Gastrocnemius medialis (tissue), 4 donors: ENCODE measurements at regions of chr11 and their contacts with region 1.

Region 1: DNA sequence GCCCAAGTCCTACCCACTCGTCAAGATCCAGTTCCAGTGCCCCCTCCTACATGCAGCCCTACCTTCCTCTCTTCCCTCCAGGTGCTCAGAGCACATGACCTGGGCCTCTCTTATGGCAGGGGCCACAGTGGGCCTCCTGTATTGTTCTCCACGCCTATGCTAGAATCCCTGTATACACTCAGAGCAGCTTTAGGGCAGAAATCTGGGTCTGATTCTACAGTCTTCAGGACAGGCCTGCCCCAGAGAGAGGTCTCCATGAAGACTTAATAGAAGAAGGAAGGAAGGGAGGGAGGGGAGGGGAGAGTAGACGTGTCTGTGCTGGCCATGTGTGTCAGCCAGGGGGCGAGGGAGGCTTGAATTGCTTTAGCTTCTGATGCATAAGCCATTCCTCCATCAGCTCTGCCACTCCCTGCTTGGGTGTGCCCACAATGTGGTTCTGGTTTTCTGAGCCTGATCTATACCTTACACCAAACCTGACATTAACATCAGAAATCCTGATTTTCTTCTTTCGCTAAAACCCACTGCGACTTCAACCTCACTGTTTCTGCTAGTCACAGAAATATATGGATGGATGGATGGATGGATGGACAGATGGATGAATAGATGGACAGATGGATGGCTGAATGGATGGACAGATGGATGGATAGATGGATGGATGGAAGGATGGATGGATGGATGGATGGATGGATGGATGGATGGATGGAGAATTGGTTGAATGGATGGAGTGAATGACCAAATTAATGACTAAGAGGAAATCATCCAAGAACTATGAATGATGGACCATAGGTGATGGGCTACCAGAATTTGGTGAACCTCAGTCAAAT is 56.6 kb upstream of the PRDM11 start:
- DNase-seq: no peak
- ATAC-seq: no peak
- H3K4me3 ChIP-seq: no peak overlapping the region
- H3K27ac ChIP-seq: peak overlapping the region; percentile 63 to 80 (median 72)
- H3K4me1 ChIP-seq: peaks cover 20 to 23% of the 10 kb centered on the region in 2 donors
- H3K27me3 ChIP-seq: no peaks in the 10 kb centered on the region
- CTCF ChIP-seq: no peak
- POLR2A ChIP-seq: no peak

Region 2: GRCh38 chr11:44950625-44951476 is 139.0 kb before region 1 on chr11 and contains the start of gene TP53I11:
- in situ Hi-C with region 1: no loop called
- intact Hi-C with region 1: loop called (anchors 5 kb)
- DNase-seq: peak; percentile 37 to 67
- ATAC-seq: peak; percentile 54 to 66
- H3K4me3 ChIP-seq: peak within 1 kb of the TSS; percentile 55 to 85 (median 76)
- H3K27ac ChIP-seq: peak within 1 kb of the TSS; percentile 72 to 82 (median 78)
- H3K4me1 ChIP-seq: peaks cover 8 to 17% of the 10 kb centered on the region in 2 donors
- H3K27me3 ChIP-seq: no peaks in the 10 kb centered on the region
- CTCF ChIP-seq: peak; percentile 26 to 74 (median 68)
- POLR2A ChIP-seq: peak; percentile 63 to 81
- total RNA-seq, gene TP53I11: 5.4 to 17.2 (median 12.8) TPM

Region 3: DNA sequence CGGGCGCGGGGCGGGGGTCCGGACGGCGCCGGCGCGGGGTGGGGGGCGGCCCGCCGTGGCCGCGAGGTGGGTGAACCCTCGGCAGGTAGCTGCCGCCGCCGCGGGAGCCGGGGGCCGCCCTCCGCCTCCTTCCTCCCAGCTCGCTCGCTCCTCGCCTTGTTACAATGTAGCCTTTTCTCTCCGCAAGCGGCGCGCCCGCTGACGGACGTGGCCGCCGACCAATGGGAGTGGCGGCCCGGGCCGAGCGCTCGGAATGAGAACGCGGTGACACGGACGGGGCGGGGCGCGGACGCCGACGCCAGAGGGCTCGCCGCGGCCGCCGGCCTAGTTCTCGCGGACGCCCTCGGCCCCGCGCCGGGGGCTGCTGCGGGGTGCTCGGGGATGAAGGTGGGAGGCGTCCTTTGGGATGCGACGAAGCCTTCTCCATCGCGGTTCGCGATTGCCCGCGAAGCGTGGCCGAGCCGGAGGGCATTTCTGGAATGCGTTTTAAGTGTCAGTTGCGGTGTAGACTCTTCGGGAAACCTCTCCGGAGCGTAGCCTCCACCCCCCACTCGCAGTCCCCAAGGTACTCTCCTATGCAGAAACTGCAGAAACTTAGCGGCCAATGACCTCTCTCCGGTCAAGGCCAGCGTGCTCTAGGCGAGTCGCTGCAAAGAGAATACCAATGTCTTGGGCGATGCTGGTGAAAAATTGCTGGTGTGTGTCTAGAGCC is 57.3 kb after region 1 on chr11:
- in situ Hi-C with region 1: no loop called
- intact Hi-C with region 1: loop called (anchors 2 kb)
- DNase-seq: peak; percentile 89 to 95
- ATAC-seq: peak; percentile 92 to 95
- H3K4me3 ChIP-seq: peak overlapping the region; percentile 80 to 87 (median 84)
- H3K27ac ChIP-seq: peak overlapping the region; percentile 95 to 100 (median 98)
- H3K4me1 ChIP-seq: peaks cover 16 to 22% of the 10 kb centered on the region in 2 donors
- H3K27me3 ChIP-seq: no peaks in the 10 kb centered on the region
- CTCF ChIP-seq: peak in 2 of 5 experiments; percentile 17 to 18
- POLR2A ChIP-seq: peak; percentile 63 to 81

Region 4: DNA sequence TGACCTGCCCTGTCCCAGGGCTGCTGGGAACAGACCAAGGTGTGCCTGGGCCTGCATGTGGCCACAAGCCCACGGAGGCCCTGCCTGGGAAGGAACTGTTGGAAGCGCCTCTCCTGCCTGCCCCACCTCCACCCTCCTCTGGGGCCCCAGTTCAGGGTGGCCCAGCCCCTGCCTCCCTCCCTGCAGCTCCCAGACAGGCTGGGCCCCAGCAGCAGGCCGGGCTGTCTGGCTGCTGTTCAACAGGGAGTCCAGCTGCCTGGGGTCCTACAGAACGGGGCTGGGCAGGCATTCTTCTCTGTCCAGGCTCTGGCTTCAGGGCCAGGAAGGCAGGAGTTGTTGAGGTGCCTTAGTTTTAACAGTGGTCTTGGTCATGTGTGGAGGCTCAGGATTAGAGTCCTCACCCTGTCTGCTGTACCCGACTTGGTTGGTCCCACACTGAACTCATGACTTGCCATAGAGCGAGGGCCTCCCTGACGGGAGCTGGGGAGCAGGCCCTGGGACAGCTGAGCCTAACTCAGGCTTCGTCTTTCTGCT is 68.4 kb after region 1 on chr11:
- in situ Hi-C with region 1: no loop called
- intact Hi-C with region 1: no loop called
- DNase-seq: no peak
- ATAC-seq: peak in 1 of 2 donors; percentile 13
- H3K4me3 ChIP-seq: no peak overlapping the region
- H3K27ac ChIP-seq: peak overlapping the region; percentile 8 to 46 (median 26)
- H3K4me1 ChIP-seq: peaks cover 32 to 42% of the 10 kb centered on the region in 2 donors
- H3K27me3 ChIP-seq: no peaks in the 10 kb centered on the region
- CTCF ChIP-seq: no peak
- POLR2A ChIP-seq: no peak

Region 5: GRCh38 chr11:45209891-45210699 is 120.2 kb after region 1 on chr11:
- in situ Hi-C with region 1: no loop called
- intact Hi-C with region 1: no loop called
- DNase-seq: peak; percentile 79 to 80
- ATAC-seq: peak; percentile 86 to 87
- H3K4me3 ChIP-seq: peak overlapping the region; percentile 23 to 52 (median 33)
- H3K27ac ChIP-seq: peak overlapping the region; percentile 53 to 86 (median 75)
- H3K4me1 ChIP-seq: peaks cover 27 to 55% of the 10 kb centered on the region in 2 donors
- H3K27me3 ChIP-seq: no peaks in the 10 kb centered on the region
- CTCF ChIP-seq: peak in 1 of 5 experiments; percentile 17
- POLR2A ChIP-seq: no peak